Dendritic cell treated with granulocyte-macrophage colony-stimulating factor and Interleukin-4, amounts not matched to agents 40 ng/mL and 50 ng/mL, for 4 days (primary cell): ENCODE measurements at regions of chr1 and their contacts with region 1.

Region 1: DNA sequence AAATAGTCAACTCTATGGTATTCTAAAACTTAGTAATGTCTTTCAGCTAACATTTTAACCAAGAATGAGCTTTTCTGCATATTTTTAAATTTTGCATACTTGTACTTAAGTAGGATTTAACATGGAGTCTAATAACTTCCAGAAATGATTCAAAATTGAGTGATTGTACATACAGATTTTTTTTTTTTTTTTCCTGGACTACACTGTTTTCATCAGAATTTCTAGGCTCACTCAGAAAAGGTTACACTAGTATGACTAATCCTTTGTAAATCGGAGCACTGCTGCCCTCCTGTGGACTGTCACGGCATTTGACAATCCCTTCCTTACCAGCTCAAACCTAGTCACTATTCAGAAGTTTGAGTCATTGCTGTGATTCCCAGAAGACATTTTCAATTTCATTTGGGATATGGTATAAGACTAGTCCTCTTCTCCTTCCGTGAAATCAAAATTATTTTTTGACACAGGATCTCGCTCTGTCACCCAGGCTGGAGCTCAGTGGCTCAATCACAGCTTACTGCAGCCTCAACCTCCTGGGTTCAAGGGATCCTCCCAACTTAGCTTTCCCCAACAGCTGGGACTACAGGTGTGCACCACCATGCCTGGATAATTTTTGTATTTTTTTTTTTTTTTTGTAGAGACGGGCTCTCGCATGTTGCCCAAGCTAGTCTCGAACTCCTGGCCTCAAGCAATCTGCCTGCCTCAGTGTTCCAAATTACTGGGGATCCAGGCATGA is 45.5 kb downstream of the CD46 start:
- H3K4me3 Mint-ChIP-seq: no peak overlapping the region
- H3K27ac Mint-ChIP-seq: no peak overlapping the region
- H3K4me1 Mint-ChIP-seq: peaks cover 32% of the 10 kb centered on the region
- H3K27me3 Mint-ChIP-seq: no peaks in the 10 kb centered on the region

Region 2: DNA sequence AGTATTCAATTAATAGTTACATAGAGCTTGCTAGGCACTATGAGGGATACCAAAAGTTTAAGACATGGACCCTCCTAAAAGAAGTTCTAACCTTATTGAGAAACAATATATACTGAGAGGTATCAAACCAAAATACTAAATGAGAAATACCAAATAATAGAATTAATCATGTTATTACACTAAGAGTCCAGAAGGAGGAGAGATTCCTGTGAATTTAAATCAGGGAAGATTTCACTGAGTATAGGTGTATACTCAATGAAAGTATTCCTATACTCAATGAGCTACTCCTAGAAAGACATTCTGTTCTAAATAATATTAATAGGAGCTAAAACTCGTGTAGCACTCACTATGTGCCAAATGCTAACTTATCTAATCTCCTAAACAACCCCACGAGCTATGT is 143.1 kb before region 1 on chr1:
- intact Hi-C with region 1: loop called (anchors 10 kb)
- H3K4me3 Mint-ChIP-seq: no peak overlapping the region
- H3K27ac Mint-ChIP-seq: no peak overlapping the region
- H3K4me1 Mint-ChIP-seq: no peaks in the 10 kb centered on the region
- H3K27me3 Mint-ChIP-seq: peaks cover 4% of the 10 kb centered on the region

Region 3: DNA sequence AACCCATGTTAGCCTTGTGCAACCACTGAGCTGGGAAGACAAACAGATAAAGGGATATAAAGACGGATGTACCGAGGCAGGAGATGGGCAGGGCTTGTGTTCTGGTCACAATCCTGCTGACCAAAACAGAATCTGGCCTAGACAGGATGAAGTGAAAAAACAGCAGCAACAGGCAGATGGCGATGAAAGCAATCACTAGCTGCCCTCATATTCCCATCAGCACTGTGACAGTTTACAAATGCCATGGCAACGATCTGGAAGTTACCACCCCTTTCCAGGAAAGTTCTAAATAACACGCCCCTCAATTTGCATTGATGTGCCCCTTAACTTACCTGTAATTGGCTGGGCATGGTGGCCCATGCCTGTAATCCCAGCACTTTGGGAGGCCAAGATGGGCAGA is 86.1 kb before region 1 on chr1:
- intact Hi-C with region 1: loop called (anchors 10 kb)
- H3K4me3 Mint-ChIP-seq: no peak overlapping the region
- H3K27ac Mint-ChIP-seq: no peak overlapping the region
- H3K4me1 Mint-ChIP-seq: no peaks in the 10 kb centered on the region
- H3K27me3 Mint-ChIP-seq: no peaks in the 10 kb centered on the region

Region 4: DNA sequence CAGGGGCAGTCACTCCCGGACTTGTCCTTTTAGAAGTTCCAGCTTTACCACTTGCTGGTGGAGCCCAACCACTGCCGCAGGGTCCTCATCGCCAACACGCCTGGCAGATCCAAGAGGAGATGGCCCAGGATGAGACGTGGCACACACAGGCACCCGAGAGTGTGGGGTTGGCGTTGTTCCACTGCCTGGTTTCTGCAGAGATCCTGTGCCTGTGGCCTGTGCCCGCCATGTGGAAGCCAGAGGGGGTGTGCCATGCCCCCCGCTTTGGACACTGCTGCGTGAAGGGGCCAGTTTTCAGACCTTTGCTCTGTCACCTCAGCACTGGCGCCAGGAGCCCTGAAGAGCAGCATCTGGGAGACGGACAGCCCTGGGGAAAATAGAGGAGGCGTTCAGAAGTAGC is 34.8 kb before region 1 on chr1:
- intact Hi-C with region 1: no loop called
- H3K4me3 Mint-ChIP-seq: no peak overlapping the region
- H3K27ac Mint-ChIP-seq: no peak overlapping the region
- H3K4me1 Mint-ChIP-seq: no peaks in the 10 kb centered on the region
- H3K27me3 Mint-ChIP-seq: no peaks in the 10 kb centered on the region

Region 5: DNA sequence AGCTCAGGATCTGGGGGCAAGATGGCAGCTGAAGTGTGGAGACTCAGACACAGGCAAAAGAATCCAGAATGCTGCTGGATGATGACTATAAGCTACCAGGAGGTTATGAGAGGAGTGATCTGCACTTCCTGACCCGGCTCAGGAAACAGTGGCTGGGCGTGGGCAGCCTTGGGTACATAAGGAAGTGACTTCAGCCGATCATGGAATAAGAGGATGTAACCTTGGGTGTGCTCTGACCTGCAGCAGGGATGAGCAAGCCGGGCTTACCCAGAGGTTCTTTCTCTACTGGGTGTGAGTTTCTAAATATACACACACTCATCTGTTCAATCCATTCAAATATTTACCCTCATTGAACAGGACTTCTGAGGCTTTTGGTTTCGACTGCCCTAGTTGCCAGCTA is 50.8 kb after region 1 on chr1:
- intact Hi-C with region 1: no loop called
- H3K4me3 Mint-ChIP-seq: no peak overlapping the region
- H3K27ac Mint-ChIP-seq: peak overlapping the region; percentile 79
- H3K4me1 Mint-ChIP-seq: peaks cover 81% of the 10 kb centered on the region
- H3K27me3 Mint-ChIP-seq: no peaks in the 10 kb centered on the region